ENCODE measurements at regions of chr3 and their contacts with region 1.

Region 1: GRCh38 chr3:27134165-27134796 is 234.9 kb downstream of the NEK10 start:
- DNase-seq: peak; percentile 58 to 69
- H3K4me3 ChIP-seq: no peak overlapping the region
- H3K4me3 Mint-ChIP-seq: no peak overlapping the region
- H3K27ac Mint-ChIP-seq: no peak overlapping the region
- H3K4me1 ChIP-seq: peaks cover 11% of the 10 kb centered on the region
- H3K4me1 Mint-ChIP-seq: peaks cover 9% of the 10 kb centered on the region
- H3K27me3 ChIP-seq: no peaks in the 10 kb centered on the region
- H3K27me3 Mint-ChIP-seq: no peaks in the 10 kb centered on the region
- CTCF ChIP-seq: peak; percentile 70 to 80

Region 2: GRCh38 chr3:27253831-27254230 is 119.5 kb after region 1 on chr3:
- CTCF ChIA-PET with region 1: interaction called, 9 read pairs
- POLR2A ChIA-PET with region 1: no interaction called
- intact Hi-C with region 1: loop called (anchors 1 kb)
- DNase-seq: peak; percentile 38 to 47
- H3K4me3 ChIP-seq: no peak overlapping the region
- H3K4me3 Mint-ChIP-seq: no peak overlapping the region
- H3K27ac Mint-ChIP-seq: no peak overlapping the region
- H3K4me1 ChIP-seq: no peaks in the 10 kb centered on the region
- H3K4me1 Mint-ChIP-seq: no peaks in the 10 kb centered on the region
- H3K27me3 ChIP-seq: no peaks in the 10 kb centered on the region
- H3K27me3 Mint-ChIP-seq: no peaks in the 10 kb centered on the region
- CTCF ChIP-seq: peak in 1 of 2 experiments; percentile 25

Region 3: DNA sequence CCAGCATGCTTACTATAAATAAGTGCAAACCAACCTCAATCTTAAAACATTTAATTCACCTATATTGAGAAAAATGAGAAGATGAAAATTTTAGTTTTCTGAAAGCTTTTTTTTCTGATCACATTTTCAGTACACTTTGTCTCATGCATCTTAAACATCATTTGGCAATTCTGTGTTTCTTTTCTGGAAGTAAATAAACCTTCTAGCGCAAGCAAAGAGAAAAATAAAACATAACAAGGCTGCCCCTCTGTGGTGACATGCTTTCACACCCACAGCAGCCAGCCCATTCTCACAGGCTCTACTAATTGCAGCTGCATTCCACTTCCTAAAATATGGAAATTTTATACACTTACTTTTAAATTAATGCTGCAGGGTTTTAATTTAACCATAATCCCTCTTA is 144.8 kb after region 1 on chr3:
- CTCF ChIA-PET with region 1: no interaction called
- POLR2A ChIA-PET with region 1: no interaction called
- intact Hi-C with region 1: loop called (anchors 1 kb)
- DNase-seq: peak in 1 of 2 experiments; percentile 9
- H3K4me3 ChIP-seq: no peak overlapping the region
- H3K4me3 Mint-ChIP-seq: no peak overlapping the region
- H3K27ac Mint-ChIP-seq: no peak overlapping the region
- H3K4me1 ChIP-seq: no peaks in the 10 kb centered on the region; the same call in 1 of the 2 replicates
- H3K4me1 Mint-ChIP-seq: peaks cover 9% of the 10 kb centered on the region
- H3K27me3 ChIP-seq: no peaks in the 10 kb centered on the region
- H3K27me3 Mint-ChIP-seq: no peaks in the 10 kb centered on the region
- CTCF ChIP-seq: peak in 1 of 2 experiments; percentile 16